ENCODE measurements at regions of chr20 and their contacts with region 1.

Region 1: GRCh38 chr20:44720617-44720993 is 5.4 kb downstream of the CCN5 start:
- DNase-seq: peak; percentile 81
- H3K4me3 Mint-ChIP-seq: peak overlapping the region; percentile 35
- H3K27ac Mint-ChIP-seq: peak overlapping the region; percentile 90
- H3K4me1 Mint-ChIP-seq: peaks cover 42% of the 10 kb centered on the region
- H3K27me3 Mint-ChIP-seq: no peaks in the 10 kb centered on the region
- CTCF ChIP-seq: no peak

Region 2: GRCh38 chr20:44692932-44693476 is 27.6 kb before region 1 on chr20:
- CTCF ChIA-PET with region 1: interaction called, 8 read pairs
- POLR2A ChIA-PET with region 1: interaction called, 10 read pairs
- intact Hi-C with region 1: no loop called
- DNase-seq: peak; percentile 95
- H3K4me3 Mint-ChIP-seq: no peak overlapping the region
- H3K27ac Mint-ChIP-seq: peak overlapping the region; percentile 56
- H3K4me1 Mint-ChIP-seq: peaks cover 20% of the 10 kb centered on the region
- H3K27me3 Mint-ChIP-seq: no peaks in the 10 kb centered on the region
- CTCF ChIP-seq: no peak

Region 3: DNA sequence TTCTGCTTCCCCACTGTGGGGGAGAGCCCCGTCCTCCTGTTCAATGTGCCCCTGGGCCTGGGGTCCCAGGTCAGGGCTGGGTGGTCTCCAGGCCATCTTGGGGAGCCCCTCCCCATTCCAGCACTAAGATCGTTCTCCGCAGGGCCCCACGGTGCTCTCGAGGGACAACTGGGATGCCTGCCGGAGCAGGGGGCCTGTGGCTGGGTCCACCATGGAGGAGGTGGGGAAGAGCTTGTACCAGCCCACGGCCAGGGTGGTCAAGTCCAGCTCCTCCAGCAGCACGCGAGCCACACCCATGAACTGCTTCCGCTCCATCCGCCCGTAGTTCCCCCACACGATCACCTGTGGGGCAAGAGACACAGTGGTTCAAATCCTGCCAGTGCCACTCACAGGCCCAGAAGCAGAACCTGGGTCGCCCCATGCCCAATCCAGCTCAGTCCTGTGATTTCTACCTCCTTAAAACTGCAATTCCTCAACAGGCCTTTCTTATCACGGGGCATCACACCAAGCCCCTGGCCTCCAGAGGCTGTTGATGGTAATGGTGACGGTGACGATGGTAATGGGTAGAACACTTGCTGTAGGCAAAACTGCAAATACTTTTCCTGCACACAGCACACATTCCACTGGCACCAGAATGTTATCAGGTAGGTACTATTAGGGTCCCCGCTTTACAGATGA is 35.5 kb after region 1 on chr20:
- CTCF ChIA-PET with region 1: no interaction called
- POLR2A ChIA-PET with region 1: no interaction called
- intact Hi-C with region 1: no loop called
- DNase-seq: no peak
- H3K4me3 Mint-ChIP-seq: no peak overlapping the region
- H3K27ac Mint-ChIP-seq: no peak overlapping the region
- H3K4me1 Mint-ChIP-seq: no peaks in the 10 kb centered on the region
- H3K27me3 Mint-ChIP-seq: peaks cover 30% of the 10 kb centered on the region
- CTCF ChIP-seq: no peak

Region 4: DNA sequence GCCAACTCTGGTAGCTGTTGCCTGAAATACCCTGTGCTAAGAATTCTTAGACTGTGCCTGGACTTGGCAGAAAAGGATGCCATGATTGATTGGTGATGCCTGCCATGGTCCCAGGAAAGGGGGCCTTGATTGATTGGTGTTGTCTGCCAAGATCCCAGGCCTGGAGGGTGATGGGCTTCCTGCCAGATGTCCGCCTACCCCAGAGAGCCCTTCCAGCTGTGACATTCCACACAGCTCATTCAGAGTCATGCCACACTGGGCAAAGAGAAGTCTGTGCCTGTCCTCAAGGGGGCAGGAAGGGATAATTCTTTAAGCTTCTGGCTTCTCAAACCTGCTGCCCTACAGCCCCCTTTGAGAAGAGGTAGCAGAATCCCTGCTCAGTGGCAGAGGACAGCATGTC is 65.2 kb after region 1 on chr20:
- CTCF ChIA-PET with region 1: no interaction called
- POLR2A ChIA-PET with region 1: no interaction called
- intact Hi-C with region 1: no loop called
- DNase-seq: peak; percentile 42
- H3K4me3 Mint-ChIP-seq: no peak overlapping the region
- H3K27ac Mint-ChIP-seq: no peak overlapping the region
- H3K4me1 Mint-ChIP-seq: no peaks in the 10 kb centered on the region
- H3K27me3 Mint-ChIP-seq: peaks cover 55% of the 10 kb centered on the region
- CTCF ChIP-seq: peak; percentile 11

Measured in MCF 10A (cell line).